ENCODE measurements at regions of chr11 and their contacts with region 1.

Region 1: DNA sequence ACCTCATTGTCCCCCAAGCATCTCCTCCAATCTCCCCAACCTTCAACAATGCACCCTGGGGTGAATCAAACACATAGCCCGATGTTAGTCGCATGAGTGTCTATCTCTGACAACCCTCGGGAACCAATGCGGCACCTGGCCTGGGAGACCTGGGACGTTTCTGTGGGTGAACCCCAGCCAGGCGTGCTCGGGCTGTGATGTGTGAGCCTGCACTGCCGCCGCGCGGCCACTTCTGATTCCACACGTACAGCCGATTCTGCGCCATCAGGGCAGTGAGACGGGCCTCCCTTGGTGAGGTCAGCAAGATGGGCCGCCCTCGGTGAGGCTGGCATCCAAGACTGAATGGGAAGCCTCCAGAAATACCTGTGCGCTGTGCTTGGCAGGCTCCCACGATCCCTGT is 5.2 kb upstream of the H19 start:
- DNase-seq: no peak
- H3K4me3 ChIP-seq: no peak overlapping the region
- H3K4me3 Mint-ChIP-seq: no peak overlapping the region
- H3K27ac ChIP-seq: no peak overlapping the region
- H3K27ac Mint-ChIP-seq: no peak overlapping the region
- H3K4me1 ChIP-seq: no peaks in the 10 kb centered on the region
- H3K4me1 Mint-ChIP-seq: no peaks in the 10 kb centered on the region
- H3K27me3 ChIP-seq: no peaks in the 10 kb centered on the region
- H3K27me3 Mint-ChIP-seq: no peaks in the 10 kb centered on the region

Region 2: DNA sequence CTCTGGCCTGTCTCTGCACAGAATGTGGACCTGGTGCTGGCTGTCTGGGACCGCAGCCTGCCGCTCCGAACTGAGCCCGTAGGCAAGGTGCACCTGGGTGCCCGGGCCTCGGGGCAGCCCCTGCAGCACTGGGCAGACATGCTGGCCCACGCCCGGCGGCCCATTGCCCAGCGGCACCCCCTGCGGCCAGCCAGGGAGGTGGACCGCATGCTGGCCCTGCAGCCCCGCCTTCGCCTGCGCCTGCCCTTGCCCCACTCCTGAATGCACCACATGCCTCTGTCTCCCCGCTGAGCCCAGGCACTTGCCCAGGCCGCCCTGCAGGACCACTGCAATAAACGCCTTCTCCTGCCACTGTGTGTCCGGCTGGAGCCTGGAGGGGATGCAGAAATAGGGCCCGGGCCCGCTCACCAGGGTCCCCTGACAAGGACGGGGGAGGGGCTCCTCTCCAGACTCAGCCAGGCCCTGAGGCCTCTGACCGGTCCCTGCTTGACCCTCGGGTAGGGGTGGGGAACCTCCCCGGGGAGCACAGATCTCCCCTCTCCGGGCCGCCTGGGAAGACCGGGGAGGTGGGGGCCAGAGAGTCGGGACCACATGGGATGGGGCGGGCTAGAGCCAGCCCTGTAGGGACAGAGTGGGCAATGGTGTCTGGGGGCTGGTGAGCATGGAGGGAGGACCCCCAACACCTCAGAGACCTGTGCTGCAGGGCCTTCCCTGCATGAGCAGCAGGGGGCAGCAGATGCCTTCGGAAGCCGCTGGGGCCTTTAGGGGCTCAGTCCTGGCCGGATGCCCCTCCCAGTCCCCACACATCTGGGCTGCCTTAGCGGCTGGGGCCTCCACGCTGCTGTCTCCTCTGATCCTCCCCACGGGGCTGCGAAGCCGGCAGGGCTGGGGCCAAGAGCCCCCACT is 165.4 kb before region 1 on chr11:
- CTCF ChIA-PET with region 1: interaction called, 48 read pairs
- POLR2A ChIA-PET with region 1: interaction called, 3 read pairs
- intact Hi-C with region 1: no loop called
- DNase-seq: peak; percentile 63 to 79 (median 75)
- H3K4me3 ChIP-seq: no peak overlapping the region
- H3K4me3 Mint-ChIP-seq: no peak overlapping the region
- H3K27ac ChIP-seq: no peak overlapping the region
- H3K27ac Mint-ChIP-seq: peak overlapping the region in 1 of 7 donors; percentile 30
- H3K4me1 ChIP-seq: peaks cover 20% of the 10 kb centered on the region
- H3K4me1 Mint-ChIP-seq: peaks cover 5 to 10% (median 6%) of the 10 kb centered on the region in 4 donors
- H3K27me3 ChIP-seq: no peaks in the 10 kb centered on the region
- H3K27me3 Mint-ChIP-seq: no peaks in the 10 kb centered on the region